ENCODE measurements at regions of chr7 and their contacts with region 1.

Region 1: DNA sequence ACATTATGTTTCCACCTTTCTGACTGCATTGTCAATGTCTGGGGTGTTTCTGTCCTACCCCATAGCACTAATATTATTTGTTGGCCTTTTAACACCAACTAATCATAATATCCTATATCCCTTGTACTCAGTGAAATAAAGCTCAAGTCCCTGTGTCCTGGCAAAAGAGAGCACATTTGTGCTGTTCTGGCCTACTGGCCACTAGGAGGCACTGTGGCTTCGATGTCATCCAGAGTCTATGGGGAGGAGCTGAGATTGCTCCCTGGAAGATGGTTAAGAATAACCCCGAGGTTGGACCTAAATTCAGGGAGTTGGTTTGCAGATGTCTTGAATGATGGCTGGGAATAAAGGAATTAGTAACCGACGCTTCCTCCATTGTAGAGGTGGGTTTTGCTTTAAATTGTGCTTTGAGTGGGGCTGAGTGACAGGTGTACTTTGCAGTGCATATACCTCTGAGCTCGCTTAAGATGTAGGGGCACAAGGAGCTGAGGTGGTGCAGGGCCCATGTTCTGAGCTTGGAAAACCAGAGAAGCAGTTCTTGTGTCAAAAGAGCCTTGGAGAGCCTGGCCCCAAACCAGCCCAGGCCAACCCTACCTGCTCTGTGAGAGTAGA is 191.2 kb upstream of the PRSS1 start:
- H3K4me3 ChIP-seq: no peak overlapping the region
- H3K27ac ChIP-seq: no peak overlapping the region
- H3K4me1 ChIP-seq: peaks cover 3% of the 10 kb centered on the region; the same call in 1 of the 2 replicates
- CTCF ChIP-seq: 0 out of 2 replicates have a peak, but pooled peaks have one; percentile 25

Region 2: GRCh38 chr7:142338633-142339501 is 219.2 kb before region 1 on chr7:
- CTCF ChIA-PET with region 1: no interaction called
- POLR2A ChIA-PET with region 1: no interaction called
- H3K4me3 ChIP-seq: no peak overlapping the region
- H3K27ac ChIP-seq: no peak overlapping the region
- H3K4me1 ChIP-seq: no peaks in the 10 kb centered on the region
- CTCF ChIP-seq: peak; percentile 79

Region 3: GRCh38 chr7:142568435-142569097 is 10.5 kb after region 1 on chr7:
- CTCF ChIA-PET with region 1: interaction called, 14 read pairs
- POLR2A ChIA-PET with region 1: no interaction called
- H3K4me3 ChIP-seq: no peak overlapping the region
- H3K27ac ChIP-seq: no peak overlapping the region
- H3K4me1 ChIP-seq: no peaks in the 10 kb centered on the region
- CTCF ChIP-seq: no peak